Heart left ventricle (tissue), 16 donors: ENCODE measurements at regions of chr3 and their contacts with region 1.

Region 1: GRCh38 chr3:111668912-111669488 is 73.9 kb upstream of the ZBED2 start:
- DNase-seq: no peak
- ATAC-seq: peak; percentile 65 to 91 (median 83)
- H3K4me3 ChIP-seq: no peak overlapping the region
- H3K27ac ChIP-seq: peak overlapping the region in 1 of 12 donors; percentile 2
- H3K4me1 ChIP-seq: peaks cover 0 to 28% (median 8%) of the 10 kb centered on the region in 12 donors
- H3K27me3 ChIP-seq: no peaks in the 10 kb centered on the region
- CTCF ChIP-seq: peak; percentile 63 to 88 (median 78)
- POLR2A ChIP-seq: no peak

Region 2: DNA sequence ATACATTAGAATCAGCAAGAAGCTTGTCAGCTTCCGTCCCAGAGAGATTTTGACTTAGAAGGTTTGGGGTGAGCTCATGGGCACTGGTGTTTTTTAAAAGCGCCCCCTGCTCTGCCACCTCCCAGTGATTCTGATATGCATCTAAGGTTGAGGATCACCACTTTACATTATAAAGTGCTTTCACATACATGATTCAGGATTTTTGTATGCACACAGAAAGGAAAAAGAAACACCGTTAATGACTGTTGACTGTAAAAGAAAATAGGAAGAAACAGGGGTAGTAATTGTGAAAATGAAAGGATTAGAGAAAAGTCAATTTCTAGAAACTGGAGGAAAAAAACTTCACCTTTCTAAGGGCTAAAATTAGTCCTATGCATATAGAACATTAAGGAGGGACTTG is 31.1 kb after region 1 on chr3:
- intact Hi-C with region 1: no loop called
- DNase-seq: no peak
- ATAC-seq: no peak
- H3K4me3 ChIP-seq: no peak overlapping the region
- H3K27ac ChIP-seq: no peak overlapping the region
- H3K4me1 ChIP-seq: no peaks in the 10 kb centered on the region
- H3K27me3 ChIP-seq: no peaks in the 10 kb centered on the region
- CTCF ChIP-seq: no peak
- POLR2A ChIP-seq: no peak

Region 3: DNA sequence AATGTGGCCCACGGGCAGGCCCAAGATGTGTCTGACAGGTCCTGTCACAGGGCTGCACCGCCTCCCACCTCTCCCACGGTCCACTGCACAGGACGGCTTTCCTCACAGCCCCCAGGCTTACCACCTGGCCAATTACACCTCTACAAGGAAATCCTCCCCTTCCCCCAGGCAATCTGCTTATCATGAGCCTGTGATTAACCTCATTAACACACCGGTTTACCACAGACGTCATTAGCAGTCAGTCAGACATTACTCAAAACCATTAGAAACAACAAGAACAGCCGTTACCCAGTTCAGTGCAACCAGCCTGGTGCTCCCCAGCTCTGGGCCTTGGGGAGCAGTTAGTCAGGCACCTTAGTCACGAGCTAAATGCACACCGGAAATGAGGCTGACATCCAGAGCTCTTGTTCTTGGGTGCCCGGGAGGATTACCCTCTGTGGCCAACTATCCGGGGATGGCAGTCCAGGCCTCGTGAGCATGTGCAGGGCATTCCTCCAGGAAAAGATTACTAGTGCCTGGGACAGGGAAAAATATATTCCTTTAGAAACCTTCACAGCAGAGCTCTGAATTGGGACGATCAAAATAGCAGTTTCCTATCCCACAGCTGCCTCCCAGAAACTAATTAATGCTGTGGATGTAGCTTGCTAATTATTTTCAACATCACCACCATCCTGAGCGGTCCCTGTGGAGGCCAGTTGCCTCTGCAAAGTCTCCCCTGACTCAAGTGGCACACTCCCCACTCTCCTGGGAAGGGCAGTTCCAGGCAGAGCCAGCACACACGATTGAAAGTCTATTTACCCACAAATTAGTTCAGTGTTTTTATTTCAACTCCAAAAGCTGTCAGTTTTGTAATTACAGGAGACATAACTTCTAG is 43.5 kb after region 1 on chr3:
- intact Hi-C with region 1: loop called in 1 of 10 experiments (anchors 5 kb)
- DNase-seq: peak in 4 of 5 donors; percentile 34 to 71 (median 38)
- ATAC-seq: peak; percentile 39 to 77 (median 65)
- H3K4me3 ChIP-seq: no peak overlapping the region
- H3K27ac ChIP-seq: peak overlapping the region in 8 of 12 donors; percentile 21 to 75 (median 58)
- H3K4me1 ChIP-seq: peaks cover 0 to 24% (median 7%) of the 10 kb centered on the region in 12 donors
- H3K27me3 ChIP-seq: no peaks in the 10 kb centered on the region
- CTCF ChIP-seq: no peak
- POLR2A ChIP-seq: no peak

Region 4: DNA sequence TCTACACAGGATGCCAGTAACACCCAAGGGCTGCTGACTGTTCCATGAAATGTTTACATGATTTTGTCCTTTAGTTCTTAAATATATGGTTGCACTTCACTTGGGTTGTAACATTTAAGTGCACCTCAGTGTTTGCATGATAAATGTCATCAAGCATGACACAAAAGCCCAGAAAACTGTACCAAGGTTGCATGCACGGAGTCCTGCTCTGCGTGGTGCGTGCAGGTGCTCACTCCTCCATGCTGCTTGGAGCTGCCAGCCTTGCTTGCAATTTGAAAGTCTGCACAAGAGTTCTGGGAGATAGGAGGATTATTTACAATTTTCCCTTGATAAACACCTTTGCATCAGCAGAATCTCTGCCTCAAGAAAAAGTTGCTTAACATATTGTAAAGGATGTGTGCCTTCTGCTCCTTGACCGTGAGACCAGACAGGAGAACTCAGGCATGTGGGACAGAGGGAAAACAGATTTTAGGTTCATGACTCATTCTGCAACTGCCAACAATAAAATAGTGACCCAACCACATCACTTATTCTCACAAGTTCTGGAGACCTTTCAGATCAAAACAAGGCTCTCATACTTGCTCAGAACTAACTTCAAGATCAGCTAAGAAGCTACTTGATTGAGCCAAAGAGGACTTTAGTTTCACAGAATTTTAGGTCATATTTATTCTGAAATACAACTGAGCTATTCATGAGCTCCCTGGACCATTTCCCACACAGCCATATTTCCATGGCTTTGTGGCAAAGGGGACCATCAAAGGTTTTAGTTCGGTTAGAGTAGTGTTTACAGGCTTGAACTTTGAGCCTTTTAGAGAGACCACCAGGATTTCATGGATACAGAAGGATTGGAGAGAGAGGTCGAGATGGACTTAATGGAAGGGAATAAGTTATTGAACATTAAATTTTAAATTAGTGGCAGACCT is 54.6 kb after region 1 on chr3:
- intact Hi-C with region 1: no loop called
- DNase-seq: no peak
- ATAC-seq: peak in 3 of 4 donors; percentile 34 to 71 (median 37)
- H3K4me3 ChIP-seq: no peak overlapping the region
- H3K27ac ChIP-seq: peak overlapping the region in 4 of 12 donors; percentile 6 to 40 (median 16)
- H3K4me1 ChIP-seq: peaks cover 0 to 23% (median 3%) of the 10 kb centered on the region in 12 donors
- H3K27me3 ChIP-seq: no peaks in the 10 kb centered on the region
- CTCF ChIP-seq: no peak
- POLR2A ChIP-seq: no peak

Region 5: GRCh38 chr3:112020674-112021085 is 351.7 kb after region 1 on chr3:
- intact Hi-C with region 1: loop called in 2 of 10 experiments (anchors 2 to 5 kb)
- DNase-seq: no peak
- ATAC-seq: no peak
- H3K4me3 ChIP-seq: no peak overlapping the region
- H3K27ac ChIP-seq: no peak overlapping the region
- H3K4me1 ChIP-seq: no peaks in the 10 kb centered on the region
- H3K27me3 ChIP-seq: no peaks in the 10 kb centered on the region
- CTCF ChIP-seq: no peak
- POLR2A ChIP-seq: no peak

Region 6: DNA sequence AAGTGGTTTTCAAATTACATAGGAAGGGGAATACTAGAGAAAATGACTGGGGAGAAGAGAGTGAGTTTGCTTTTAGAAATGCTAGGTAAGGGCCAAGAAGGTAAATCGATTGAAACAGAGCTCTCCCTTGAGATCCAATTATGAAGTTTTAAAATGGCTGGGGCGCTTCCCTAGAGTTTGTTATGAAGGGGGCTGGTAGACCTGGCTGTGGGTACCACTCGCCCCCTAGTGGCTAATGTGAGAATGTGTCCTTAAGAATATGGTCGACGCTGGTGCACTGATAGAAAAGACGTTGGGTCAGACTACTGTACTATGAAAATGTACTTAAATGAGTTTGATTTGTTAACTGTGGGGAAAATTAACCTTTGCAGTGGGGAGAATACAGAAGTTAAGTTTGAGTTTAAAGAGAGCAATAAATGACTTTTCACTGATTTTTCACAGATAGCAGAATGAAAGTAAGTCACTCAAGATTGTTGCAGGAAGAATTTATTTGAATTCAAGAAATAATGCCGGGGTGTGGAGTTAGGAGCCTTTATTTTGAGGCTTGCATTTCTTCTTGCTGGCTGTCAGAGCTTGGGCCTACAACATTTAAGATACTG is 374.7 kb after region 1 on chr3:
- intact Hi-C with region 1: loop called in 4 of 10 experiments (anchors 1 to 10 kb)
- DNase-seq: peak in 4 of 5 donors; percentile 37 to 47 (median 38)
- ATAC-seq: peak; percentile 88 to 97 (median 91)
- H3K4me3 ChIP-seq: peak overlapping the region in 1 of 12 donors; percentile 7
- H3K27ac ChIP-seq: no peak overlapping the region
- H3K4me1 ChIP-seq: peaks cover 0 to 8% (median 0%) of the 10 kb centered on the region in 12 donors
- H3K27me3 ChIP-seq: no peaks in the 10 kb centered on the region
- CTCF ChIP-seq: peak; percentile 81 to 97 (median 90)
- POLR2A ChIP-seq: no peak